ENCODE measurements at regions of chr11 and their contacts with region 1.

Region 1: GRCh38 chr11:2363577-2364370 is 13.3 kb upstream of the CD81 start:
- DNase-seq: no peak
- ATAC-seq: no peak
- H3K4me3 ChIP-seq: no peak overlapping the region
- H3K4me1 ChIP-seq: no peaks in the 10 kb centered on the region
- CTCF ChIP-seq: no peak

Region 2: DNA sequence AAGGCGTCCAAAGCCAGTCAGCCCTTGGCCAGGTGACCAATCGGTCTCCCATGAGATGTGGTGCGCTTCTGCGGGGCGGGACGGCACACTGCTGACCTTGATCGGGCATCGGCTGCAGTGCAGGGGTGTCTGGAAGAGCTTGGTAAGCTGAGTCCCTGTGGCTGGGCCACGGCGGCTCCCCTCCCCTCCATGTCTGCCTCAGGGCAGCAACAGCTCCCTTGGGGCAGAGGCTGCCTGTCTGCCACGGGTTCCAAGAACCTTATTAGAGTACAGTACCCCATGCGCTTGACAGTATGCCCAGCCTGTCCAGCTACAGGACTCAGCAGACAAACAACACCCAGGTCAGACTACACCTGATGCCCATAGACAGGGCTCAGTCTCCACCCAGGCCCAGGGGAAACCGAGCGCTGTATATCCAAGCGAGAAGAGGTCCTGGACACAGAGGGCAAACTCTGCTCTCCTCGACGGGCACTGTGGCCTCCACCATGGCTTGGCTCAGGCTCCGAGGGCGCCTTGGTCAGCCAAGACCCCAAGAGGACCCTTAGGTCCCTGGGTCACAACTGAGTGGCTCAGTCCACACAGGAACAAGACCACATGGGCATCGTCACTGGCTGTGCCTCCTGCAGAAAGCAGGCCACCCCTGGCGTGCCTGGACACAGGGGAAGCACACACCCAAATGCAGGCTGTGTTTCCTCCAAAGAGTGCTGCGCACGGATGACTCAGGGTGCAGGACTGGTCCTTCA is 43.0 kb before region 1 on chr11:
- intact Hi-C with region 1: loop called in 1 of 2 experiments (anchors 2 kb)
- DNase-seq: no peak
- ATAC-seq: no peak
- H3K4me3 ChIP-seq: no peak overlapping the region
- H3K4me1 ChIP-seq: no peaks in the 10 kb centered on the region
- CTCF ChIP-seq: no peak

Region 3: DNA sequence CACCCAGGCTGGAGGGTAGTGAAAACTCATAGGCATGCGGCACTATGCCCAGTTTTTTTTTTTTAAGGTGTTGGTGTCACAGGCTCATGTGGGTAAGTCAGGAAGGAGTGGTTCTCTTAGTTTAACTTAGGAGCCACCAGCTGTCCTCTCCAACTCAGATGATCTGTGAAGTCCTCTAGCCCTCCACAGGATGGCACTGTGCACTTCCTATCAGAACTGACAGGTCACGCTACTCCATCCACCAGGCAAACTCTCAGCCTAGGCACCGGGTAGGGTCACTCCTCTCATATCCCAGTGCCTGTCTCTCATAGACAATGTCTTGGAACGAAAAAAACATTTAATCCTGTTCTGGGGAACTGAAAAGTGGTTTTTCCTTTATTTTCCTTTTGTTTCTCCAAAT is 611.8 kb after region 1 on chr11:
- intact Hi-C with region 1: no loop called
- DNase-seq: no peak
- ATAC-seq: peak; percentile 89
- H3K4me3 ChIP-seq: no peak overlapping the region
- H3K4me1 ChIP-seq: no peaks in the 10 kb centered on the region
- CTCF ChIP-seq: no peak

Measured in mucosa of descending colon (tissue), 3 donors.